ENCODE measurements at regions of chr14 and their contacts with region 1.

Region 1: DNA sequence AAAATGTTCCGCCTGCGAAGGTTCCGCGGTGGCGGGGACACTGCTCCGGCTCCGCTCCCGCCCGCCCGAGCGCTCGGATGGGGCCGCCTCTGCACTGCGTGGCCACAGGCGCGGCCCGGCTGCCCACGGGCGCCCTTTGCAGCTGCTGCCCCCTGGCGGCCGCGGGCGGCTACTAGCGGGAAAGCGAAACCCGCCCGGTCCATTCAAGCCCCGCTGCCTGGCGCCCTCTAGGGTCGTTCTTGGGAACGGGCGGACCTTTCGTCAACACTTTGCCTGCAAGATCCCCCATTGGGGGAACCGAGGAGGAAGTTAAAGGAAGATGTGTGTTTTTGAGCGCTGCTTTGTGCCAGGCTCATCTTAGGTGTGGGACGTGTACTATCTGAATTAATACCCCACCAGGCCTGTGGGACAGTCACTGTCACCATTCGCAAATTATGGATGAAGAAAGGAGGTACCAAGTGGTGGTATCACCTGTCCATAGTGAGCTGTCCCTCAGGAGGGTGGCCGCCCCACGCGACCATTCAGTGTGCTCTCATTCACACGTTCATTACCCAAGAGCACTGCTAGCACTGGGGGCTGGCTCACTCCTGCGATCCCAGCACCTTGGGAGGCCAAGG is 19.4 kb downstream of the GPR132 start:
- DNase-seq: peak; percentile 65 to 76
- ATAC-seq: peak; percentile 86 to 92
- H3K4me3 ChIP-seq: no peak overlapping the region
- H3K27ac ChIP-seq: no peak overlapping the region
- H3K4me1 ChIP-seq: no peaks in the 10 kb centered on the region
- H3K27me3 ChIP-seq: peaks cover 0 to 5% (median 0%) of the 10 kb centered on the region in 3 donors
- CTCF ChIP-seq: peak; percentile 97 to 100 (median 100)
- POLR2A ChIP-seq: no peak

Region 2: GRCh38 chr14:104826189-104826860 is 219.5 kb before region 1 on chr14:
- in situ Hi-C with region 1: no loop called
- intact Hi-C with region 1: no loop called
- DNase-seq: peak; percentile 71 to 81
- ATAC-seq: peak; percentile 94 to 95
- H3K4me3 ChIP-seq: peak overlapping the region; percentile 56 to 76 (median 62)
- H3K27ac ChIP-seq: peak overlapping the region in 1 of 4 donors; percentile 26
- H3K4me1 ChIP-seq: peaks cover 0 to 18% of the 10 kb centered on the region in 2 donors
- H3K27me3 ChIP-seq: peaks cover 0 to 4% (median 3%) of the 10 kb centered on the region in 3 donors
- CTCF ChIP-seq: peak; percentile 46 to 95 (median 87)
- POLR2A ChIP-seq: no peak

Region 3: GRCh38 chr14:104976198-104977007 is 69.4 kb before region 1 on chr14:
- in situ Hi-C with region 1: loop called (anchors 5 kb)
- intact Hi-C with region 1: loop called (anchors 1 kb)
- DNase-seq: peak; percentile 59 to 74
- ATAC-seq: peak; percentile 27 to 54
- H3K4me3 ChIP-seq: no peak overlapping the region
- H3K27ac ChIP-seq: no peak overlapping the region
- H3K4me1 ChIP-seq: peaks cover 18% of the 10 kb centered on the region in 2 donors
- H3K27me3 ChIP-seq: peaks cover 0 to 13% (median 8%) of the 10 kb centered on the region in 3 donors
- CTCF ChIP-seq: peak; percentile 84 to 97 (median 92)
- POLR2A ChIP-seq: no peak

Region 4: GRCh38 chr14:105012171-105012985 is 33.4 kb before region 1 on chr14:
- in situ Hi-C with region 1: no loop called
- intact Hi-C with region 1: loop called (anchors 5 kb)
- DNase-seq: no peak
- ATAC-seq: no peak
- H3K4me3 ChIP-seq: no peak overlapping the region
- H3K27ac ChIP-seq: no peak overlapping the region
- H3K4me1 ChIP-seq: no peaks in the 10 kb centered on the region
- H3K27me3 ChIP-seq: no peaks in the 10 kb centered on the region
- CTCF ChIP-seq: peak in 2 of 5 experiments; percentile 23 to 44
- POLR2A ChIP-seq: no peak

Region 5: DNA sequence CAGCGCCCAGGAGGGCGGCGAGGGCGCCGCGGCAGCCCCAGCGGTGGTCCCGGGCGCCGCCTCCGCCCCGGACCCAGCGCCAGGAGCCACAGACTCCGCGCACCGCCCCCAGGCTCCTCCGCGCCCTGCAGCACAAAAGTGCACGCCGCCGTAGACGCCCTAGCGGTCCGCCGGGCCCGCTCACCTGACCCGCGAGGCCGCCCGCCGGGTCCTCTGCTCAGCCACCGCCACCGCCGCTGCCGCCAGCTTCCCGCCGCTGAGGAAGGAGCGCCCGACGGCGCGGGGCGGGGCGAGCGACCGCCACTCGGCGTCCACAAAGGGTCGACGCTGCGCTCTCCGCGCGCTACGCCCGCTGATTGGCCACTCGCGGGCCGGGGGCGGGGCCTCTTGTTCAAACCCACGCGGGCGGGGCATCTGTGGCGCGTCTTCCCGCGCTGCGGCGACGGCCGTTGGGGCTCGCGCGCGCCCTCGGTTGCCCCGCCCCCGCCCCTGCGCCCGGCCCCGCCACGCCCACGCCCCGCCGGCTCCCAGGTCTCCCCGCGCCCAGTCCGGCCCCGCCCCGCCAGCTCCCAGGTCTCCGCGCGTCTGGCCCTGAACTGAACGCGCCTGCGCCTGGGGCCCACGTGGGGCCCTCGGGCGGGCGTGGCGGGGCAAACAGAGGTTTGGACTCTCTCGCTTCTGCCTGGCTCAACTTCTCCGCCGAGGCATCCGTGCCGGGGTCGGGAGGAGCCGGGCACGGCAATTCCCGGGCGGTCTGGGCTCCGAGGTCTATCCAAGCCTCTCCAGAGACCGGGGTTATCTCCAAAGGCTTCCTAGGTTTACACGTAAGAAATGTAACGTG is 24.8 kb before region 1 on chr14 and contains the start of gene CDCA4:
- in situ Hi-C with region 1: no loop called
- intact Hi-C with region 1: loop called (anchors 1 kb)
- DNase-seq: peak; percentile 88 to 94
- ATAC-seq: peak; percentile 97
- H3K4me3 ChIP-seq: peak within 1 kb of the TSS; percentile 70 to 83 (median 80)
- H3K27ac ChIP-seq: peak within 1 kb of the TSS; percentile 75 to 91 (median 86)
- H3K4me1 ChIP-seq: peaks cover 16 to 23% of the 10 kb centered on the region in 2 donors
- H3K27me3 ChIP-seq: no peaks in the 10 kb centered on the region
- CTCF ChIP-seq: peak in 1 of 5 experiments; percentile 16
- POLR2A ChIP-seq: peak; percentile 75 to 82
- total RNA-seq, gene CDCA4: 0.71 to 2.2 (median 1.8) TPM